HepG2 (cell line): ENCODE measurements at regions of chr2 and their contacts with region 1.

Region 1: GRCh38 chr2:85066874-85067351 is 66.3 kb upstream of the TCF7L1 start:
- DNase-seq: peak; percentile 77
- ATAC-seq: peak; percentile 91
- H3K4me3 ChIP-seq: peak overlapping the region; percentile 34 to 56 (median 46); a peak in 5 of 6 replicates
- H3K27ac ChIP-seq: no peak overlapping the region
- H3K4me1 ChIP-seq: peaks cover 16% of the 10 kb centered on the region
- H3K27me3 ChIP-seq: peaks cover 0 to 20% of the 10 kb centered on the region in 2 experiments; a peak in 2 of 5 replicates
- CTCF ChIP-seq: peak; percentile 88
- EP300 ChIP-seq: no peak
- POLR2A ChIP-seq: no peak
- RAD21 ChIP-seq: peak; percentile 82

Region 2: DNA sequence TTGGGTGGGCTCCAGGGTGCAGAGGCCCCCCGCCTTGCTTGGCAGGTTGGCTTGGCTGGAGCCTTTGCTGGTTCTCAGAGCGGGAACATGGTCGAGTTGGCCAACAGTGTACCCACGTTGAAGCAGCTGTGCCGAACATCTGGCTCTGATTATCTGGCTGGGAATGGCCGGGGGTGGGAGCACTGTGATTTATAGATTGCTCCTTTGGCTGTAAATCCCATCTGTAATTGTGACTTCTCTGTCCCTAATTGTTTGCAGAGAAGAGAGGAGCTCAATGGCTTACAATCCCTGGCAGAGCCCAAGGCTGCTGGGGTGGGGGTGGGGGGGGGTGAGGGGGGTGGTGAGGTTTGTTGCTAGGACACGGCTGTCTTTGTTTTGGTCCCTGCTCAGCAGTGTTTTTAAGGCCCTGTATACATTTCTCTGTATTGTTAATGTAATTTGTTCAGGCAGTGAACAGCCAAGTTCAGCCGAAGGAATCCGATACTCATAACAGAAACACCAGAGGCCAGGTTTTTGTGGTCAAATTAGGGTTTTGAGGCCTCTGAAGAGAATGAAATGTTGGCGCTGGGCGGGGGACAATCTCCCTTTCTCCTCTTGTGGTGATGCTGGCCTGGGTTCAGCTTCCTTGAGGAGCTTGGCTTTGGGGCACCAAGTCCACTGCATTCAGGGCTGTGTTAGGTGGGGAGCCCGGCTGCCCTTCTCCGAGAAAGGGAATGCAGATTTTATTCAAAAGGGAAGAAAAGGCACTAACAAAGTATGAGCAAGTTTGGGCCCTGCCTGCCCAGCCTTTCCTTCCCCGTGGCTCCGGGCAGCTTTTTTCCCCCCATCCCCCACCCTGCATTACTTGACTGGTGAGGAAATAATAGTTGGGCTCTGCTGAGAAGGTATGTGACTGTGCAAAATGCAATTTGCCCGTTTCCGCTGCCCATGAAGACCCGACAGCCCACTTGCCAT is 148.8 kb after region 1 on chr2:
- CTCF ChIA-PET with region 1: no interaction called
- POLR2A ChIA-PET with region 1: no interaction called
- in situ Hi-C with region 1: no loop called
- intact Hi-C with region 1: loop called (anchors 1 kb)
- DNase-seq: no peak
- ATAC-seq: no peak
- H3K4me3 ChIP-seq: no peak overlapping the region
- H3K27ac ChIP-seq: no peak overlapping the region
- H3K4me1 ChIP-seq: no peaks in the 10 kb centered on the region
- H3K27me3 ChIP-seq: peaks cover 10 to 49% of the 10 kb centered on the region in 2 experiments; a peak in 4 of 5 replicates
- CTCF ChIP-seq: no peak
- EP300 ChIP-seq: no peak
- POLR2A ChIP-seq: no peak
- RAD21 ChIP-seq: no peak

Region 3: DNA sequence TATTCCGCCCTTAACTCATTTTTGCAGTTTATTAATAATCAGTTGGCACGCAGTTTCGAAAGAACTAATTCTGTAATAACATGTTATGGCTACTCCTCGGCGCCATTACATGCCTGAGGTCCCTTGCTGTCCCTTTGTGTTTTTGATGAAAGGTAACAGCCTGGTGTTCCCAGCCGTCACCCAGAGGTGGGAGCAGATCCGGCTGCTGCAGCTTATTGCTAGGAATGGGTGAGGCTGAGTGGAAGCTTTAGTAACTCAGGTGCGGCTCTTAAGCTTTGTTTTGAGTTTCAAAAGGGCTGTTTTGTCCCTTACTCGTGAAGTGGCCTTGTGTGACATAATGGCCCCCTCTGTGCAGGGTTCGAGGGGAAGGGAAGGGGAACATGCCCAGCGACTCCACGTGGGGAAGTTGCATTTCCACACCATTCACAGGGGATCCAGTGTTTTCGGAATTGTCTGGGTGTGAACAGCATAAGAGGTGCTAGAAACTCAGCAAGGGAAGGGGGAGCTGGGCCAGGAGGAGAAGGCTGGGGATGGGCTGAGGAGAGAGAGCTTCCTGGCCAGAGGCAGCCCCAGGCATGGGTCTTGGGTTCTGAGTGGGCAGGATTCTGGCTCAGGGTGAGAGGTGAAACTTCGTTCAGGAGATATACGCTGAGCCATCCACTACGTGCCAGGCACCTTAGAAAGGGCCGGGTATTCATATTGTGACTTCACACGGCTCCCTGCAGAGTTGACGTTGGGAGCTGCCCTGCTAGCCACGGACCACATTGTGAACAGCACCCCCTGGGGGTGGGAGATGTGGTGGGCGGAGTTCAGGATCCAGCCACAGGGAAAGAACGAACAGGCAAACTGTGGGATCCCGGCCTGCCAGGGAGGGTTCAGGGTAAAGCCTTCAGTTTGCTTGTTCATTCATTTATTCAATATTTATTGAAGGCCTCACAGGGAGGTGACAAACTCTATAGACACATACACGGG is 176.5 kb after region 1 on chr2:
- CTCF ChIA-PET with region 1: interaction called, 7 read pairs
- POLR2A ChIA-PET with region 1: no interaction called
- in situ Hi-C with region 1: loop called (anchors 10 kb)
- intact Hi-C with region 1: loop called (anchors 1 kb)
- DNase-seq: peak; percentile 50
- ATAC-seq: peak; percentile 95
- H3K4me3 ChIP-seq: no peak overlapping the region
- H3K27ac ChIP-seq: no peak overlapping the region
- H3K4me1 ChIP-seq: no peaks in the 10 kb centered on the region
- H3K27me3 ChIP-seq: peaks cover 4 to 49% of the 10 kb centered on the region in 2 experiments; a peak in 4 of 5 replicates
- CTCF ChIP-seq: peak; percentile 85
- EP300 ChIP-seq: no peak
- POLR2A ChIP-seq: no peak
- RAD21 ChIP-seq: peak; percentile 67

Region 4: GRCh38 chr2:85288244-85288725 is 221.4 kb after region 1 on chr2:
- CTCF ChIA-PET with region 1: interaction called, 25 read pairs
- POLR2A ChIA-PET with region 1: no interaction called
- in situ Hi-C with region 1: no loop called
- intact Hi-C with region 1: loop called (anchors 1 kb)
- DNase-seq: no peak
- ATAC-seq: no peak
- H3K4me3 ChIP-seq: no peak overlapping the region
- H3K27ac ChIP-seq: no peak overlapping the region
- H3K4me1 ChIP-seq: peaks cover 13% of the 10 kb centered on the region
- H3K27me3 ChIP-seq: peaks cover 0 to 36% of the 10 kb centered on the region in 2 experiments; a peak in 3 of 5 replicates
- CTCF ChIP-seq: no peak
- EP300 ChIP-seq: no peak
- POLR2A ChIP-seq: no peak
- RAD21 ChIP-seq: no peak

Region 5: GRCh38 chr2:85302121-85302520 is 235.2 kb after region 1 on chr2:
- CTCF ChIA-PET with region 1: interaction called, 21 read pairs
- POLR2A ChIA-PET with region 1: no interaction called
- in situ Hi-C with region 1: loop called (anchors 5 kb)
- intact Hi-C with region 1: loop called (anchors 1 kb)
- DNase-seq: no peak
- ATAC-seq: no peak
- H3K4me3 ChIP-seq: no peak overlapping the region
- H3K27ac ChIP-seq: no peak overlapping the region
- H3K4me1 ChIP-seq: peaks cover 72% of the 10 kb centered on the region
- H3K27me3 ChIP-seq: peaks cover 0 to 11% of the 10 kb centered on the region in 2 experiments; a peak in 3 of 5 replicates
- CTCF ChIP-seq: no peak
- EP300 ChIP-seq: no peak
- POLR2A ChIP-seq: no peak
- RAD21 ChIP-seq: no peak